ENCODE measurements at regions of chr1 and their contacts with region 1.

Region 1: DNA sequence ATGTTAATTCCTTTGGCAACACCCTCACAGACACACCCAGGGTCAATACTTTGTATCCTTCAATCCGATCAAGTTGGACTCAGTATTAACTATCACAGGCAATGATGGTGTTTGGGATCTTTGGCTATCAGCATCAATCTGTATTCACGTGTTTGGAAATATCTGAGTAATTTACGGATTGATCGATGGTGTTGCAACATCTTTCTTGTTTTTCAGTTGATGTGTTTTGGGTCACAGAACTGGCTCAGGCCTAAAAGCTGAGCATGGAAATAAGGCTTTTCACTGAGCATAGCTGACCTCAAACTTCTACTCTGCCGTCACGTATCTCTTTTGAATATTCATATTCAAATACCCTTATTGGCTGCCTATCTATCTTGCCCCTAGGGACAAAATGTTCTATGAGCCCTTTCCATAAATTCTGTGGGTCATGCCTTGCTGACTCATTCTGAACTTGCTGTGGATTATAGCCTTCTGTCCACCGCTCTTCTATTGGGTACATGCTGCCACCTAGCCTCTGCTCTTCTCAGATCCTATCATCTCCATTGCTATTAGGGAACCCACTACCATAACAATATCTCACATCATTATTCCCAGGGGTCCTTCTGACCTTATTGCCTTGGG is 156.0 kb downstream of the PDE4B start:
- DNase-seq: peak; percentile 64
- ATAC-seq: 0 out of 2 replicates have a peak, but pooled peaks have one; percentile 27
- H3K4me3 ChIP-seq: no peak overlapping the region
- H3K27ac ChIP-seq: no peak overlapping the region
- H3K4me1 ChIP-seq: no peaks in the 10 kb centered on the region; the same call in 1 of the 2 replicates
- H3K27me3 ChIP-seq: peaks cover 4% of the 10 kb centered on the region; the same call in 1 of the 2 replicates
- CTCF ChIP-seq: peak; percentile 70

Region 2: DNA sequence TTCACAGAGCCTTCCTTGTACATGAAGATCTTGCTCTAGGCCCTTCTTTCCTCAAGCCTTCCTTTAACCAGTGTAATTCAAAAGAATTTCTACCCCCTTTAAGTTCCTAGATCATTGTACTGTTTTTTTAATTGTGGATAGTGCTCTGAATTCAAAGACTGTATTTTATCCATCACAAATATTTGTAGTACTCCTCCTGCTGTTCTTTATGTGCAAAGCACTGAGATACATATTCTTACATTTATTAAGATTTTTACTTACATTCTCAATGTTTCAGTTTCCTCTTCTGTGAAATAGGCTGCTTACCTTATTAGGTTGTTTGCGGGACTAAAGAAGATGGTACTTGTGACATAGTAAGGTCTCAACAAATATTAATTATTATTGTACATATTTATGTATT is 324.8 kb before region 1 on chr1:
- CTCF ChIA-PET with region 1: no interaction called
- POLR2A ChIA-PET with region 1: no interaction called
- intact Hi-C with region 1: no loop called
- DNase-seq: no peak
- ATAC-seq: no peak
- H3K4me3 ChIP-seq: no peak overlapping the region
- H3K27ac ChIP-seq: no peak overlapping the region
- H3K4me1 ChIP-seq: no peaks in the 10 kb centered on the region
- H3K27me3 ChIP-seq: peaks cover 71% of the 10 kb centered on the region
- CTCF ChIP-seq: peak; percentile 40

Region 3: DNA sequence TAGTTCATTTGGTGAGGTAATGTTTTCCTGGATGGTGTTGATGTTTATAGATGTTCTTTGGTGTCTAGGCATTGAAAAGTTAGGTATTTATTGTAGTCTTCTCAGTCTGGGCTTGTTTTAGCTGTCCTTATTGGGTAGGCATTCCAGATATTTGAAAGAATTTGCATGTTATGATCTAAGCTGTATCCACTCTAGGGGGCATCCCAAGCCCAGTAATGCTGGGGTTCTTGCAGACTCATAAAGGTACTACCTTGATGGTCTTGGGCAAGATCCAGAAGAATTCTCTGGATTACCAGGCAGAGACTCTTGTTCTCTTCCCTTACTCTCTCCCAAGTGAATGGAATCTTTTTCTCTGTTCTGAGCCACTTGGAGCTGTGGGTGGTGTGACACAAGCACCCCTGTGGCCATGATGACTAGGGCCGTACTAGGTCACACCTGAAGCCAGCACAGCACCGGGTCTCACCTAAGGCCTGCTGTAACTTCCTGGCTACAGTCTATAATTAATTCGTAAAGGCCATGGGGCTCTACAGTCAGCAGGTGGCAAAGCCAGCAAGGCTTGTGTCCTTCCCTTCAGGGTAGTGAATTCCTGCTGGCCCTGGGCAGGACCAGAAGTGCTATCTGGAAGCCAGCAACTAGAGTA is 230.8 kb before region 1 on chr1:
- CTCF ChIA-PET with region 1: no interaction called
- POLR2A ChIA-PET with region 1: no interaction called
- intact Hi-C with region 1: loop called (anchors 10 kb)
- DNase-seq: peak; percentile 60
- ATAC-seq: no peak
- H3K4me3 ChIP-seq: no peak overlapping the region
- H3K27ac ChIP-seq: no peak overlapping the region
- H3K4me1 ChIP-seq: no peaks in the 10 kb centered on the region
- H3K27me3 ChIP-seq: peaks cover 34% of the 10 kb centered on the region
- CTCF ChIP-seq: peak; percentile 50; the same call in 1 of the 2 replicates